ENCODE measurements at regions of chr19 and their contacts with region 1.

Region 1: DNA sequence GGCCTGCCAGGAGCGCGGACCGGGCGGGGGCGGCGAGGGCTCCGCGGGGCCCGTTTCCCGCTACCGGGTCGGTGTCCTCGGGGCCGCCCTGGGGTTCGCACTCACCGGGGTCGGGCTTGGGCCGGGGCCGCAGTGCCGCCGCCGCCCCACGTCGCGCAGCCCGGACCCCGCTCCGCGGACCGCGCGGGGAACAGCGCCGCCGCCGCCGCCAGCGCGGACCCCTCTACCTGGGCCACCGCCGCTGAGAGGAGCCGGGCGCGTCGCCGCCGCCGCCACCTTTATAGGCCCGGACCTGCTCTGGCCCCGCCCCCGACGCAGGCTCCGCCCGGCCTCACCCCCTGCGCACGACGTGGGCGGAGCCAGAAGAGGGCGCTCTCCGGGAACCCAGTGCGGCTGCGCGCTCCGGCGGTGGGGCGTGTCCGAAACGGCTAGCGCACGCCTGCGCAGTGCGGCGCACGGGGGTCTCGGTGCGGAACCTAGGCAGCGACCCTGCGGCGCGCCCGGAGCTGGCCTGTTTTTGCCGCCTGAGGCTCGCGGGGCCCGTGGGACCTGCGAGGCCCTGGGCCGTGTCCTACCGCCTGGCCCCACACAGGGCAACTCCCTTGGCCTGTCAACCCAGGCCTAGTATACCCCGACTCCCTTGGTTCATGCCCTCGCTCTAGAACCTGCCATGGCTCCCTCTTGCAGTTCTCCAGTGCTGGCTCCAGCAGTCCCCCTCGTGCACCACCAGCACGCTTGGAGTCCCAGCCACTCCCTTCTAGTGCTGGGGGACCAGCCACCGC is at the start of gene MKNK2:
- DNase-seq: peak; percentile 72 to 99
- H3K4me3 ChIP-seq: peak within 1 kb of the TSS; percentile 54 to 100 (median 88)
- H3K27ac ChIP-seq: peak within 1 kb of the TSS; percentile 64
- H3K4me1 ChIP-seq: peaks cover 0 to 13% (median 10%) of the 10 kb centered on the region in 4 experiments; a peak in 5 of 7 replicates
- H3K27me3 ChIP-seq: no peaks in the 10 kb centered on the region
- CTCF ChIP-seq: peak; percentile 66 to 75 (median 68)
- EP300 ChIP-seq: no peak
- POLR2A ChIP-seq: peak in 1 of 2 experiments; percentile 100; a peak in 2 of 3 replicates
- RAD21 ChIP-seq: peak in 1 of 2 experiments; percentile 23; a peak in 2 of 4 replicates
- total RNA-seq, gene MKNK2: 163 and 174 TPM in 2 replicates

Region 2: DNA sequence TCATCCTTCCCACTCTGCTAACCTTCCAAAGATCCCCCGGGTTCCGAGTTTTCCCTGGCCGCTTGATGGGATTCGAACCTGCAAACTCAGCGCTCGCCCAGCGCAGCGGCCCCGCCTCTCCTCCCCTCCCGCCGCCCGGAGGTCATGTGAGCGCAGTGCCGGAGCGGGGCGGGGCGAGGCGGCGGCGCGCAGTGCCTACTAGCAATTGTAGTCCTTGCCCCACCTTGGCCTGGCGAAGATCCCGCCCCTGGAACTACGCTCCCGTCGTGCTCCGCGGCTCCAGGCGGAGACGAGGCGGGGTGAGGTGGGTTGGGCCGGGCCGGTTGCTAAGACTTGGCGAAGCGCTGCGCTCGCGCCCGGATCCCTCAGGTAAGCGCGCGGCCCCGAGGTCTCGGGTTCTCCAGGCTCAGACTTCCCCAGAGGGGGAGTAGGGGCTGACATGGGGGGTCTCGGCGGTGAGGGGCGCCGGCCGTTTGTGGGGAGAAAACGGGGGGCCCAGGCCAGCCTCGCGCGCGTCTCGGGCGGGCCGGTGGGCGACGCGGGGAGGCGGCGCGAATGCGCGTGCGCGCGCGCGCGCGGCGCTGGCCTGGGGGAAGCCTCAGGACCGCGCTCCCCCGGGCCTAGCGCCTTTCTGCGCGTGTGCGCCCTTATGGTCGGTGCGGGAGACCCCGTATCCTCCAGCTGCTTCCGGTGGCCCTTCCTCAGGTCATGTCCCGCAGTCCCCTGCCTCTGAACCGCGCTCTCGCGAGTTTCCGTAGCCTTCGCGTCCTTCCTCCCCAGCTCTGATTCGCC is 145.9 kb before region 1 on chr19 and contains the starts of genes ADAT3 and SCAMP4:
- CTCF ChIA-PET with region 1: no interaction called
- POLR2A ChIA-PET with region 1: interaction called, 10 read pairs
- DNase-seq: peak; percentile 94 to 95
- H3K4me3 ChIP-seq: peak within 1 kb of the TSS; percentile 51 to 71 (median 58)
- H3K27ac ChIP-seq: peak within 1 kb of the TSS; percentile 87
- H3K4me1 ChIP-seq: peaks cover 0 to 9% (median 8%) of the 10 kb centered on the region in 4 experiments; a peak in 5 of 7 replicates
- H3K27me3 ChIP-seq: no peaks in the 10 kb centered on the region
- CTCF ChIP-seq: no peak
- EP300 ChIP-seq: peak in 1 of 2 experiments; percentile 62; a peak in 1 of 3 replicates
- POLR2A ChIP-seq: peak in 1 of 2 experiments; percentile 82; a peak in 1 of 3 replicates
- RAD21 ChIP-seq: no peak
- total RNA-seq, gene ADAT3: 10.2 and 10.8 TPM in 2 replicates
- total RNA-seq, gene SCAMP4: 61.4 and 65.7 TPM in 2 replicates

Region 3: GRCh38 chr19:2061495-2062381 is 10.6 kb after region 1 on chr19:
- CTCF ChIA-PET with region 1: interaction called, 7 read pairs
- POLR2A ChIA-PET with region 1: interaction called, 74 read pairs
- DNase-seq: peak; percentile 93 to 98
- H3K4me3 ChIP-seq: peak overlapping the region; percentile 41 to 68 (median 54)
- H3K27ac ChIP-seq: peak overlapping the region; percentile 92
- H3K4me1 ChIP-seq: peaks cover 4 to 28% (median 19%) of the 10 kb centered on the region in 4 experiments
- H3K27me3 ChIP-seq: no peaks in the 10 kb centered on the region
- CTCF ChIP-seq: peak in 2 of 3 experiments; percentile 0 to 4; a peak in 2 of 4 replicates
- EP300 ChIP-seq: no peak
- POLR2A ChIP-seq: peak in 1 of 2 experiments; percentile 76; a peak in 2 of 3 replicates
- RAD21 ChIP-seq: no peak; a peak in 1 of 4 replicates

Region 4: GRCh38 chr19:2070436-2070827 is 19.2 kb after region 1 on chr19:
- CTCF ChIA-PET with region 1: interaction called, 17 read pairs
- POLR2A ChIA-PET with region 1: interaction called, 6 read pairs
- DNase-seq: no peak
- H3K4me3 ChIP-seq: no peak overlapping the region
- H3K27ac ChIP-seq: no peak overlapping the region
- H3K4me1 ChIP-seq: no peaks in the 10 kb centered on the region; a peak in 1 of 7 replicates
- H3K27me3 ChIP-seq: no peaks in the 10 kb centered on the region
- CTCF ChIP-seq: no peak
- EP300 ChIP-seq: no peak
- POLR2A ChIP-seq: no peak
- RAD21 ChIP-seq: no peak

Region 5: DNA sequence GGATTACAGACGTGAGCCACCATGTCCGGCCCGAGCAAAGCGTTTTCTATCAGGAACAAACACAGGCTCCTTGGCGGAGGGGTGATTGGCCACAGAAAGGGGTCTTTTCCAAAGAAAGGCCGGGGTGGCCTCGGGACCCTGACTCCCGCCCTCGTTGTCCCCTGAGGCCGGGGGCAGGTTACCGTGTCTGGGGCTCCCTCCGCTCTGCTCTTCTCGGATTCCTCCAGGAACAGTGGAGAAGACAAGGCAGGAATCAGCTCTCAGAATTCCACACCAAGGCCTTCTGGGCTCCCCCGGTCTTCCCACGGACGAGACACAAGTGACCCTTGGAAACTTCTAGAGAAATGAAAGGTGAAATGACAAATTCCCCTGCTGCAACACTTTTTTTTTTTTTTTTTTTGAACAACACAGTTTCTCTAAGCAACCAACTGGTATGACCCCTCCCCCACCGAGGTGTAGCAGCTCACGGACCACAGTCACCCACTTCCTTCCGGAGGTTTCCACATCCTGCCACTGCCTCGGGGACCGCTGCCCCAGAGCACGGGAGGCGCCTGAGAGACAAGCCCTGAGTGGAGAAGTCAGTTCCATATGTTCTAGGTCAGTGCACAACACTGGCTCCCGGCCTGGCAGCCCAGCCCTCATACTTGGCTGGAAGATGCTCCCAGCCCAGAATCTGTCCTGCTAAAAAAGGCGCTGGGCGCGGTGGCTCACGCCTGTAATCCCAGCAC is 34.0 kb after region 1 on chr19:
- CTCF ChIA-PET with region 1: no interaction called
- POLR2A ChIA-PET with region 1: interaction called, 14 read pairs
- DNase-seq: no peak
- H3K4me3 ChIP-seq: no peak overlapping the region
- H3K27ac ChIP-seq: no peak overlapping the region
- H3K4me1 ChIP-seq: peaks cover 0 to 5% (median 2%) of the 10 kb centered on the region in 4 experiments; a peak in 3 of 7 replicates
- H3K27me3 ChIP-seq: no peaks in the 10 kb centered on the region
- CTCF ChIP-seq: no peak
- EP300 ChIP-seq: no peak
- POLR2A ChIP-seq: no peak
- RAD21 ChIP-seq: no peak

Region 6: DNA sequence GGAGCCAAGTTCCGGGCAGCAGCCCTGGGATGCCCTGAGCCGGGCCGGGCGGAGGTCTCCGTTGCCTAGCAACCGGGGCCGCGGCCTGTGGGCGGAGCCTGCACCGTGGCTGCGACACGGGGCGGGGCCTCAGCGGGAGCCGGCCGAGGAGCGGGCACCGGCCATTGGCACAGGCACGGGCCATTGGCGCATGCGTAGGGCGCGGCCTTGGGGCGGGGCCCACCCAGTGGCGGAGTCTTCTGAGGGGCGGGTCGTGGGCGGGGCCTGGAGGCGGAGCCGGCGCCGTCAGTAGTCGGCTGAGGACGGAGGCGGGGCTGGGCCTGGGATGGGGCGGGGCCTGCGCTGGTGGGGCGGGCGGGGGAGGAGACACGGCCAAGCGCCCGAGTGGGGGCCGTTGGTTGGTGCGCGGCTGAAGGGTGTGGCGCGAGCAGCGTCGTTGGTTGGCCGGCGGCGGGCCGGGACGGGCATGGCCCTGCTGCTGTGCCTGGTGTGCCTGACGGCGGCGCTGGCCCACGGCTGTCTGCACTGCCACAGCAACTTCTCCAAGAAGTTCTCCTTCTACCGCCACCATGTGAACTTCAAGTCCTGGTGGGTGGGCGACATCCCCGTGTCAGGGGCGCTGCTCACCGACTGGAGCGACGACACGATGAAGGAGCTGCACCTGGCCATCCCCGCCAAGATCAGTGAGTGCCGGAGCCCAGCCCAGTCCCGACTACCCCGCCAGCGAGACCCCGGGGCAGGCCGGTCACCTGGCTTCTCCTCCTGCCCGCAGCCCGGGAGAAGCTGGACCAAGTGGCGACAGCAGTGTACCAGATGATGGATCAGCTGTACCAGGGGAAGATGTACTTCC is 45.5 kb after region 1 on chr19 and contains the start of gene IZUMO4:
- CTCF ChIA-PET with region 1: interaction called, 3 read pairs
- POLR2A ChIA-PET with region 1: interaction called, 11 read pairs
- DNase-seq: peak; percentile 94 to 99
- H3K4me3 ChIP-seq: peak within 1 kb of the TSS; percentile 42 to 85 (median 51)
- H3K27ac ChIP-seq: no peak within 1 kb of the TSS; the same call in 1 of the 2 replicates
- H3K4me1 ChIP-seq: peaks cover 0 to 3% (median 1%) of the 10 kb centered on the region in 4 experiments; a peak in 4 of 7 replicates
- H3K27me3 ChIP-seq: no peaks in the 10 kb centered on the region
- CTCF ChIP-seq: peak; percentile 24 to 53 (median 39); a peak in 2 of 4 replicates
- EP300 ChIP-seq: no peak
- POLR2A ChIP-seq: no peak
- RAD21 ChIP-seq: peak; percentile 29 to 32; a peak in 2 of 4 replicates
- total RNA-seq, gene IZUMO4: 1.3 and 1.8 TPM in 2 replicates

Region 7: DNA sequence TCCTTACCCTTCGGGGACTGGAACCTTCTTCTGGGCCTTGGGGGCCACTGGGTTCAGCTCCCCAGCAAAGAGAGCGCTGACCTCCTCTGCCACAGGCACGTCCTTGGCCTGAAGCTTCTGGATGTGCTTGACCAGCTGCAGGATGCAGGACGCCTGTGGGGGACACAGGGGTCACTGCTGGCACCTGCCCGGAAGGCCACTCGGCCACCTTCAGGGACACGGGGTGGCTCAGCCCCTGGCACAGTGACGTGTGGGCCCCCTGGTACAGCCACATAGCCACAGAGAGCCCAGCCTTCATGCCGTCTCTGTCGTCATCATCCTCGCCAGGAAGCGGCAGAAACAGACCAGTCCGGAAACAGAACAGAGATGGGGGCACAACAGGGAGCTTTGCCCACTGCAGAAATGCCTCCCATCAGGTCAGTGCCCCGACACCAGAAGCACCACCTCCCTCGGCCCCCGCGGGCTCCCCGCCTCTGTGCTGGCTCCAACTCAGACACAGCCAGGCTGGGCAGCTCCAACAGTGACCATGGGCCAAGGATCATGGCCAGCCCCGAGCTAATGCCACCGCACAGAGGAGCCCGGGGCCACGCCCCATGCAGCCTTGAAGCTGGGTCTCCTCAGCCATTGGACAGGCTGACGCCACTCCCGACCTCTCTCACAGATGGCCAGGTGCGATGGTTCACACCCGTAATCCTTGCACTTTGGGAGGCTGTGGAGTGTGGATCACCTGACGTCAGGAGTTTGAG is 66.2 kb after region 1 on chr19:
- CTCF ChIA-PET with region 1: no interaction called
- POLR2A ChIA-PET with region 1: no interaction called
- DNase-seq: no peak
- H3K4me3 ChIP-seq: no peak overlapping the region
- H3K27ac ChIP-seq: no peak overlapping the region
- H3K4me1 ChIP-seq: no peaks in the 10 kb centered on the region
- H3K27me3 ChIP-seq: no peaks in the 10 kb centered on the region
- CTCF ChIP-seq: no peak
- EP300 ChIP-seq: no peak
- POLR2A ChIP-seq: no peak
- RAD21 ChIP-seq: no peak